ENCODE measurements at regions of chr19 and their contacts with region 1.

Region 1: GRCh38 chr19:55345818-55346724 is 6.4 kb downstream of the KMT5C start:
- DNase-seq: peak in 1 of 10 donors; percentile 27
- H3K4me3 ChIP-seq: no peak overlapping the region
- H3K27ac ChIP-seq: peak overlapping the region in 2 of 59 donors; percentile 53 to 73
- H3K27me3 ChIP-seq: peaks cover 0 to 7% (median 0%) of the 10 kb centered on the region in 45 donors
- CTCF ChIP-seq: no peak

Region 2: DNA sequence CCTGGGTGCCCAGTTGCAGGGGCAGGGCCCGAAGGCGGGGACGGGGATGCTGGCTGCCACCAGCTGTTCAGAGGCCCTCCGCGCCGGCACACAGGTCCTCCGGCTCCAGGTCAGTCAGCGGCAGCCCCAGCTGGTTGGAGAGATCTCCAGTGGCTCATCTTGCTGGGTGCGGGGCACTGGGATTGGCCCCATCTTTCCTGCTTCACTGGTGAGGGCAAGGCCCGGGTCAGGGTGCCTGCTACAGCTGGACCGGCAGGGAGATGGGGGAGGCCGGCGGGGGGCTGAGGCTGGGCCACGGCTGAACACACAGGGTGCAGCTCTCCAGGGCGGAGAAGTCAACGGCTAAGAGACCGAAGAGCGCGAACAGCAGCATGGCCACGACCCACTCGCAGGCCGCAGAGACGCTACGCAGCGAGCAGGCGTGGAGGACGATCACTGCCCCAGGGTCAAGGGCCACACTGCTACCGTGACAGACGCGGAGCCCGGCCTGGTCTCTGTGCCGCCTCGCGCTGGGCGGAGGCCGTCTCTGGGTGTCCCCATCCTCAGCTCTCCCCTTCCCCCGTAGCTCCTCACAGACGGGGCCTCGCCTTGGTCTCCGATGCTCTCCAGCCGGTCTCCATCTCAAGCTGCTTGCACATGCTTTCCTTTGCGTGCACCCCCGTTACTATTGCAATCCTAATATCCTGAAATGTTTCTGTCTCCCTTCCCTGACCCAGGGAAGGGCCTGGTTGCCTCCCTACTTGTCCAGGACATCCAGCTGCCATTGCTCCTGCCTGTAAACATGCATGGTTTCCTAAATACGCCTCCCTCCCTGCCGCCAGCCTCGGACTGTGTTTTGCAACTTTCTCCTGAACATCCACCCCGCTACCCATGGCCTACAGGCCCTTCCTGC is 33.2 kb before region 1 on chr19:
- intact Hi-C with region 1: loop called in 1 of 2 experiments (anchors 5 kb)
- DNase-seq: no peak
- H3K4me3 ChIP-seq: no peak overlapping the region
- H3K27ac ChIP-seq: peak overlapping the region in 9 of 59 donors; percentile 9 to 69 (median 26)
- H3K27me3 ChIP-seq: no peaks in the 10 kb centered on the region
- CTCF ChIP-seq: no peak

Region 3: GRCh38 chr19:55377356-55378131 is 31.5 kb after region 1 on chr19:
- intact Hi-C with region 1: loop called in 1 of 2 experiments (anchors 2 kb)
- DNase-seq: peak in 1 of 10 donors; percentile 33
- H3K4me3 ChIP-seq: peak overlapping the region in 1 of 59 donors; percentile 15
- H3K27ac ChIP-seq: no peak overlapping the region
- H3K27me3 ChIP-seq: peaks cover 0 to 36% (median 14%) of the 10 kb centered on the region in 45 donors
- CTCF ChIP-seq: no peak

Region 4: DNA sequence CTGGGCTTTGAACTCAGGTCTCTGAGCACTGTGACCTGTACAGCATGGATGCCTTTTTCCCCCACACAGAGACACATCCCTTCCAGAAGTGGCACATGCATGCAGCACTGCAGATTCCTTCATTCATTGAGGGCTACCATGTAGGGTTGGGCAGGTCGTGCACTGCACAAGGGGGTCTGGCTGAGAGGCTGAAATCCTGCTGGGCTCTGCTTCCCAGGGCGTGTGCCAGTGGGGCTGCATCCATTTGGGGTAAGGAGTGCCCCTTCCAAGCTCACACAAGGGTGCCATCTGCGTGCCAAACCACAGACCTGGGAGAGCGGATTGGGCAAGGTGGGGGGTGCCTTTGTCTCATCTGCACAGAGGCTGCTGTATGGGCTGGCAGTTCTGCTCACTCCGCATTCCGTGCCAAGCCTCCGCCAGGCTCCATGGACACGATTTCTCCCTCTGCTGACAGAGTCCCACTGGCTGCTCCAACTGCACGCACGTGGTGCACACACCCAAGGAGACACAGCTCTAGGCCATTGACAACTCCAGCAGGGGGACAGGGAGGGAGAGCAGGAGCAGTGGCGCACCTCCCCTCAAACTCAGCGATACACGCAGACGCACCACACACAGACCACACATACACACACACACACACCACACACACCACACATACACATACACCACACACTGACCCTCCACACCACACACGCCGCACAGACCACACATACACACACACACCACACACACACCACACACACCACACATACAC is 101.5 kb after region 1 on chr19:
- intact Hi-C with region 1: no loop called
- DNase-seq: peak; percentile 68 to 94 (median 90)
- H3K4me3 ChIP-seq: no peak overlapping the region
- H3K27ac ChIP-seq: peak overlapping the region in 56 of 59 donors; percentile 3 to 90 (median 76)
- H3K27me3 ChIP-seq: peaks cover 0 to 15% (median 0%) of the 10 kb centered on the region in 45 donors
- CTCF ChIP-seq: peak in 16 of 56 donors; percentile 9 to 50 (median 21)

Measured in dorsolateral prefrontal cortex (tissue), 120 donors.